Caco-2 (cell line): ENCODE measurements at regions of chr2 and their contacts with region 1.

Region 1: DNA sequence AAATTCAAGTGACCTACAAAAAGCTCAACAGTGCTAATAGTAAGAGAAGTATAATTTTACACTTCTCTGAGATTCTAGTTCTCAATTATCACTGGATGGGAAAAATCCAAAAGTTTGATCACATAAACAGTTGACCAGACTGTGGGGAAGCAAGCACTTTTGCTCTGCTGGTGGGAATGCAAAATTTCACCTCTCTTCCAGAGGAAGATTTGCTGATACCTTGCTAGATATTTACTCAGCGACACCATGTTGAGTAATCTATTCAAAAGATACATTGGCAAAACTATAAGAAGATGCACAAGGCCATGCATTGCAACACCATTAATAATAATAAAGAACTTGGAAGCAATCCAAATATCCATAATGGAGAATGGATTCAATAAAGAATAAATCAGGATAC is 204.4 kb downstream of the MREG start:
- DNase-seq: peak in 1 of 2 experiments; percentile 34
- H3K4me3 ChIP-seq: no peak overlapping the region
- H3K4me3 Mint-ChIP-seq: no peak overlapping the region
- H3K27ac Mint-ChIP-seq: no peak overlapping the region
- H3K4me1 ChIP-seq: peaks cover 7% of the 10 kb centered on the region; the same call in 1 of the 2 replicates
- H3K4me1 Mint-ChIP-seq: peaks cover 18% of the 10 kb centered on the region
- H3K27me3 ChIP-seq: no peaks in the 10 kb centered on the region
- H3K27me3 Mint-ChIP-seq: no peaks in the 10 kb centered on the region
- CTCF ChIP-seq: peak in 1 of 2 experiments; percentile 36

Region 2: GRCh38 chr2:215736653-215737290 is 72.2 kb before region 1 on chr2:
- CTCF ChIA-PET with region 1: no interaction called
- POLR2A ChIA-PET with region 1: no interaction called
- intact Hi-C with region 1: loop called (anchors 5 kb)
- DNase-seq: peak; percentile 57 to 62
- H3K4me3 ChIP-seq: no peak overlapping the region
- H3K4me3 Mint-ChIP-seq: no peak overlapping the region
- H3K27ac Mint-ChIP-seq: no peak overlapping the region
- H3K4me1 ChIP-seq: peaks cover 4% of the 10 kb centered on the region; the same call in 1 of the 2 replicates
- H3K4me1 Mint-ChIP-seq: peaks cover 7% of the 10 kb centered on the region
- H3K27me3 ChIP-seq: no peaks in the 10 kb centered on the region
- H3K27me3 Mint-ChIP-seq: no peaks in the 10 kb centered on the region
- CTCF ChIP-seq: peak; percentile 59 to 69

Region 3: GRCh38 chr2:215749092-215749957 is 59.7 kb before region 1 on chr2:
- CTCF ChIA-PET with region 1: no interaction called
- POLR2A ChIA-PET with region 1: no interaction called
- intact Hi-C with region 1: no loop called
- DNase-seq: peak; percentile 39 to 42
- H3K4me3 ChIP-seq: no peak overlapping the region
- H3K4me3 Mint-ChIP-seq: no peak overlapping the region
- H3K27ac Mint-ChIP-seq: peak overlapping the region; percentile 70
- H3K4me1 ChIP-seq: peaks cover 23% of the 10 kb centered on the region
- H3K4me1 Mint-ChIP-seq: peaks cover 21% of the 10 kb centered on the region
- H3K27me3 ChIP-seq: no peaks in the 10 kb centered on the region
- H3K27me3 Mint-ChIP-seq: no peaks in the 10 kb centered on the region
- CTCF ChIP-seq: no peak